AG04450 (cell line): ENCODE measurements at regions of chr2 and their contacts with region 1.

Region 1: DNA sequence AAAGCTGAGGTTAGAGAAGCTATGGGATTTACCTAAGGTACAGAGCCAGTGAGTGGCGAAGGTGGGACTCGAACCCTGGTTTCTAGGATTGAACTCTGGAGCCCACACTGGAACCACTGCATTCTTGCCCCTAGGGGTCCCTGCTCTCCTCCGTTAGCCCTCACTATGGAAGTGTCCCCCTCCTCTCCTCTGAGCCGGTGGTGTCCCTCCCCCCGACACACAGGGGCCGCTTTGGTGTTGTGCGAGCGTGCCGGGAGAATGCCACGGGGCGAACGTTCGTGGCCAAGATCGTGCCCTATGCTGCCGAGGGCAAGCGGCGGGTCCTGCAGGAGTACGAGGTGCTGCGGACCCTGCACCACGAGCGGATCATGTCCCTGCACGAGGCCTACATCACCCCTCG is 8.5 kb upstream of the GMPPA start:
- DNase-seq: no peak
- H3K4me3 ChIP-seq: no peak overlapping the region
- H3K27ac ChIP-seq: no peak overlapping the region
- H3K27me3 ChIP-seq: no peaks in the 10 kb centered on the region
- CTCF ChIP-seq: no peak; the same call in 1 of the 2 replicates

Region 2: GRCh38 chr2:219446081-219446521 is 44.1 kb before region 1 on chr2:
- CTCF ChIA-PET with region 1: no interaction called
- POLR2A ChIA-PET with region 1: no interaction called
- DNase-seq: no peak
- H3K4me3 ChIP-seq: no peak overlapping the region
- H3K27ac ChIP-seq: no peak overlapping the region
- H3K27me3 ChIP-seq: no peaks in the 10 kb centered on the region
- CTCF ChIP-seq: no peak

Region 3: DNA sequence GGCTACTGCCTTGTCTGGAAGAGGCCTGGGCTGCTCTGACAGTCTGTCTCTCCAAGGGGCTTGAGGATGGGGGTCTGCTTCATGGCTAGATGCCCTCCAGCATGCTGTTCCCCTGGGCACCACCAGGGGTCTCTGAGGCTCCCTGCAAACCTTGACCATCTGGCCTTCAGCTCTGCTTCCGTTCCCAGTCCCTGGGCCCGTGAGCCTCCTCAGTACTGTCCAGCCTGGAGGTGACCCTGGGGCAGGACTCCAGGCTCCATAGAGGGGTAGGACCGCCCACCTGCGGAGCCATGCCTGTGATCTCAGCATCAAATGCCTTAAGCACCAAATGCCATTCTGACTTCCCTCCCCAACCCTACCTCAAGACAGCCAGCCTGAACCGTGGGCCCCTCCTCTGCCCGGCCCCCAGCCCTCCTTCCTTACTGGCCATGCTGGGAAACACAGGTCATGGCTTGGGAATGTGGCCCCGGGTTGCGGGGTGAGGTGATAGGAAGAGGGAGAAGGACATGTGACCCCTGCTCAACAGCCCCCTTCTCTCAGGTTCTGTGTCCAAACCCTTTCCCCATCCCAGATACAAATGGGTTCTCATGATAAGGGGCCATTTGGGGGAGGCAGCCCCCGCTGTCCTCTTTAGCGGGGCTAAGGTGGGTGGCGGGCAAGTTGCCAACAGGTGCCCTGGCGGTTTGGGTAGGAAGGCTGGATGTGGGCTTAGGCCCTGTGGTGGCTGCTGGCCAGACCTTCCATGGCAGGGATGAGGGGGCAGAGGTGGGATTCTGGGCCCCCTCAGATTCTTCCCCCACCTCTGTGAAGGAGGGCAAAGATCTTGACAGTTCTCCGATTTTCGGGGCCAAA is 30.5 kb before region 1 on chr2:
- CTCF ChIA-PET with region 1: interaction called, 18 read pairs
- POLR2A ChIA-PET with region 1: interaction called, 3 read pairs
- DNase-seq: no peak
- H3K4me3 ChIP-seq: no peak overlapping the region
- H3K27ac ChIP-seq: peak overlapping the region; percentile 70
- H3K27me3 ChIP-seq: no peaks in the 10 kb centered on the region
- CTCF ChIP-seq: peak; percentile 95

Region 4: GRCh38 chr2:219571311-219572236 is 81.4 kb after region 1 on chr2 and contains the start of gene OBSL1:
- CTCF ChIA-PET with region 1: no interaction called
- POLR2A ChIA-PET with region 1: no interaction called
- DNase-seq: no peak
- H3K4me3 ChIP-seq: peak within 1 kb of the TSS; percentile 68
- H3K27ac ChIP-seq: peak within 1 kb of the TSS; percentile 21
- H3K27me3 ChIP-seq: peaks cover 22% of the 10 kb centered on the region
- CTCF ChIP-seq: no peak
- polyA plus RNA-seq, gene OBSL1: 35.5 and 46.8 TPM in 2 replicates

Region 5: GRCh38 chr2:219642465-219643080 is 152.4 kb after region 1 on chr2:
- CTCF ChIA-PET with region 1: no interaction called
- POLR2A ChIA-PET with region 1: no interaction called
- DNase-seq: peak; percentile 87
- H3K4me3 ChIP-seq: no peak overlapping the region
- H3K27ac ChIP-seq: no peak overlapping the region
- H3K27me3 ChIP-seq: no peaks in the 10 kb centered on the region
- CTCF ChIP-seq: peak; percentile 100